Calu3 (cell line): ENCODE measurements at regions of chr5 and their contacts with region 1.

Region 1: GRCh38 chr5:151740336-151740942 is 18.0 kb downstream of the ATOX1 start:
- DNase-seq: peak; percentile 74
- H3K4me3 Mint-ChIP-seq: peak overlapping the region; percentile 18
- H3K27ac Mint-ChIP-seq: peak overlapping the region; percentile 60
- H3K4me1 Mint-ChIP-seq: peaks cover 56% of the 10 kb centered on the region
- H3K27me3 Mint-ChIP-seq: no peaks in the 10 kb centered on the region
- CTCF ChIP-seq: peak; percentile 88

Region 2: DNA sequence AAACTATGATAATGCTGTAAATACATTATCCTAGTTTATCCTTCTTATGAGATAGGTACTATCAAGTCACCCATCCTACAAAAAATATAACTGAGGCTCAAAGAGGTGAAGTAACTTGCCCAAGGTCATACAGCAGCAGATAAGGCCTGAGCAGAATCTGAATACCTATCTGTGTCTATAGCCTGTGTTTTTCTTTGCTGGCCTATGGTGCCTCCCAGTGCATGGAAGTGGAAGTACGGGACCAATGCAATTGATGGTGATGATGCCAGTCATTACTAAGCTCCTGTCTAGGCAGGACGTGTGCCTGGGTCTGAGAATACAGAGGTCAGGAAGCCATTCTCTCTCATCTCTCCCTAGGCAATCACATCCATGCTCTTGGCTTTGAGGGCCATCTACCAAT is 217.1 kb before region 1 on chr5:
- CTCF ChIA-PET with region 1: no interaction called
- intact Hi-C with region 1: loop called (anchors 10 kb)
- DNase-seq: peak; percentile 48
- H3K4me3 Mint-ChIP-seq: no peak overlapping the region
- H3K27ac Mint-ChIP-seq: no peak overlapping the region
- H3K4me1 Mint-ChIP-seq: no peaks in the 10 kb centered on the region
- H3K27me3 Mint-ChIP-seq: peaks cover 39% of the 10 kb centered on the region
- CTCF ChIP-seq: peak; percentile 63

Region 3: GRCh38 chr5:151637676-151638075 is 102.8 kb before region 1 on chr5:
- CTCF ChIA-PET with region 1: no interaction called
- intact Hi-C with region 1: no loop called
- DNase-seq: no peak
- H3K4me3 Mint-ChIP-seq: no peak overlapping the region
- H3K27ac Mint-ChIP-seq: no peak overlapping the region
- H3K4me1 Mint-ChIP-seq: no peaks in the 10 kb centered on the region
- H3K27me3 Mint-ChIP-seq: peaks cover 93% of the 10 kb centered on the region
- CTCF ChIP-seq: no peak

Region 4: GRCh38 chr5:151659001-151659754 is 81.3 kb before region 1 on chr5:
- CTCF ChIA-PET with region 1: interaction called, 48 read pairs
- intact Hi-C with region 1: loop called (anchors 1 kb)
- DNase-seq: peak; percentile 93
- H3K4me3 Mint-ChIP-seq: no peak overlapping the region
- H3K27ac Mint-ChIP-seq: no peak overlapping the region
- H3K4me1 Mint-ChIP-seq: peaks cover 17% of the 10 kb centered on the region
- H3K27me3 Mint-ChIP-seq: peaks cover 22% of the 10 kb centered on the region
- CTCF ChIP-seq: peak; percentile 90

Region 5: GRCh38 chr5:151771259-151772028 is 31.0 kb after region 1 on chr5 and contains the start of gene G3BP1:
- CTCF ChIA-PET with region 1: interaction called, 16 read pairs
- intact Hi-C with region 1: loop called (anchors 1 kb)
- DNase-seq: peak; percentile 100
- H3K4me3 Mint-ChIP-seq: no peak within 1 kb of the TSS
- H3K27ac Mint-ChIP-seq: no peak within 1 kb of the TSS
- H3K4me1 Mint-ChIP-seq: peaks cover 15% of the 10 kb centered on the region
- H3K27me3 Mint-ChIP-seq: no peaks in the 10 kb centered on the region
- CTCF ChIP-seq: peak; percentile 32
- total RNA-seq, gene G3BP1: 356 and 393 TPM in 2 replicates